ENCODE measurements at regions of chr5 and their contacts with region 1.

Region 1: DNA sequence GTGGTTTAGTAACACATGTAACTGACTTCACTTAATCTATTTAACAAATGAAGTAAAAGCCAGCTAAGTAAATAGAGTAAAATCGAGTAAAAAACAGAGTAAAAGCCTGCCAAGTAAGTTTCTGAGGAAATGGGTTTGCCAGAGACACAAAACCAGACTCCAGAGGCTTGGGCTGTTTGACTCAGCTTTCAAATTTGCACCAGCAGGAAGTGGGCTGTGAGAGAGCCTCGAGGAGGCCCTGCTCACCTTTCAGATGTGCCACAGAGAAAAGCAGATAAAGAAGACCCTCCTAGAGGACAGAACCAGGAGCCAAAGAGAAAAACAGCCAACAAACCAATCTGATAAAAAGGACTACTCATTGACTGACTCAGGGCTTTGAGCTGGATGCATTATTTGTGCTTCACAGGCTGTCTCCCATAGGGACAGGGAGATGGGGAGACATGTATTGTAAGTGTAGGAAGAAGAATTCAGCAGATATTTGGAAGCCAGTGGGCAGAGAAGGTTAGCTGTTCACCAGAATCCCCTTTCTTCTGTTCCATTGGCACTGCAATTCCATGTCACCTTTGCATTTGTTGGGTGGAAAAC is 14.4 kb upstream of the AMACR start:
- DNase-seq: peak; percentile 49
- ATAC-seq: peak; percentile 100
- H3K4me3 Mint-ChIP-seq: peak overlapping the region; percentile 65
- H3K27ac Mint-ChIP-seq: peak overlapping the region; percentile 94
- H3K4me1 Mint-ChIP-seq: peaks cover 21% of the 10 kb centered on the region
- H3K27me3 Mint-ChIP-seq: no peaks in the 10 kb centered on the region

Region 2: DNA sequence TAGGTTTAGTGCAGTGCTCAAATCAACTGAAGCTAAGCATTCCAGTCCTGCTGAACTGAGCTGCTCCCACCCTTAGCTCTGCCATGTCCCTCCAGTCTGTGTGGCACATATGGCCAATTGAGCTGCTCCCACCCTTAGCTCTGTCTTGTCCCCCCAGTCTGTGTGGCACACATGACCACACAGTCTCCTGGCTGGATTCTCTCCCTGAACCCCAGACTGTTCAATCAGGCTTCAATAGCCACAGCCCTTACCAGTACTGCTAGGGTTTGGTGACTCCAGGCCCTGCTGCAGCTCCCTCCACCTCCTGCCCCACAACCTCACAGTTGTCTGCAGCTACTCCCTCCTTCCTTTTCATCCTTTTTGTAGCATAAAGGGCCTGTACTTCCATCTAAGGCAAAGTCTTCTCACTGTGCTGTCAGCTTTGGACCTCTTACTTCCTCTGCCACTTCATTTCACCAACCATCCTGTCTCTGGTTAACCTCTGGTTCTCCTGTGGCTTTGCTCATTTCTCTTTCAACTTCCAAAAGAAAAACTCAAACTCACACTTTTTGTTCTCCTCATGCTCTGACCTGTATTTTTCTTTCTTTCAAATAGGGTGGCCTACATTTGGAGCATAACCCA is 181.2 kb before region 1 on chr5:
- POLR2A ChIA-PET with region 1: no interaction called
- DNase-seq: peak; percentile 42
- ATAC-seq: peak; percentile 97
- H3K4me3 Mint-ChIP-seq: peak overlapping the region; percentile 23
- H3K27ac Mint-ChIP-seq: peak overlapping the region; percentile 78
- H3K4me1 Mint-ChIP-seq: peaks cover 27% of the 10 kb centered on the region
- H3K27me3 Mint-ChIP-seq: peaks cover 9% of the 10 kb centered on the region

Region 3: DNA sequence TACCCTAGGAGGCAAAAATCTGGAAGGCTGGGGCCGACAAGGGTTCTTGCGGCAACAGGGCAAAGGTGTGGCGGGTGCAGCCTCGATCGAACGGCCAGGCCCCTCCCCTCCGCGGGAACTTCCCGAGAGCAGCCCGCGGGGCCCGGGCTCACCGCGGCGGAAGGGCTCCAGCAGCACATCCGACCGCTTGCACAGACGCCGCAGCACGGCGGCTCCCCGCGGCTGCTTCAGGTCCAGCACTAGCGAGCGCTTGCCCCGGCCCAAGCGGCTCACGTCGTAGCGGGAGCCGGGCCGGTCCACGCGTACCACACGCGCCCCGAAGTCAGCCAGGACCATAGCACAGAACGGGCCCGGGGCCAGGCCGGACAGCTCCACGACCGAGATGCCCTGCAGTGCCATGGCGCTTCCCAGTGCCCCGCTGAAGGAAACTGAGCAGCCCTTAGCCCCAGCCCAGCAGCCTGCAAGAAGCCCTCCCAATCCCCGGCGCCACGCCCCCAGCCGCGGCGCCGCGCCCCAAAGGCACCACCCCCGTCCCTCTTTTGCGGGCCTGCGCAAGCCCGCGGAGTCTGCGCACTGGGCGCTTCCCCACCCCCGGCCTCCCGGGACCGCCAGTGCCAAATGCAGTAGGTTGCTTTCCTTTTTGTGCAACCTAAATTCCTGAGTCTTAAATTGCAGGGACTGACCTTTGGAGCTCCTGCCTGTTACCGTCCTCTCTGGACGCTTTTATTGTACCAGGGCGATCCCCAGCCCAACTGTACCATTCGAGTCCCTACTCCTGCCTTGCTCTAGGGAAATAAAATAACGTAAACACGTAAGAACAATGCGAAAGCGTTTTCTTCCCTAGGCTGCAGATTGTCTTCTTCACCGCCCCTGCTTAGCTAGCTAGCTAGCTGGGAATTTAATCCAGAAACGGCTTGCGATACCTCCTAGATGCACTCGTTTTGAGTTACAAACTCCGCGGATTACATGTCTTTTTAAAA is 14.3 kb before region 1 on chr5 and contains the start of gene AMACR:
- POLR2A ChIA-PET with region 1: interaction called, 13 read pairs
- DNase-seq: peak; percentile 86
- ATAC-seq: peak; percentile 89
- H3K4me3 Mint-ChIP-seq: peak within 1 kb of the TSS; percentile 87
- H3K27ac Mint-ChIP-seq: peak within 1 kb of the TSS; percentile 90
- H3K4me1 Mint-ChIP-seq: peaks cover 23% of the 10 kb centered on the region
- H3K27me3 Mint-ChIP-seq: peaks cover 5% of the 10 kb centered on the region
- total RNA-seq, gene AMACR: 5.9 to 6.1 TPM

Region 4: DNA sequence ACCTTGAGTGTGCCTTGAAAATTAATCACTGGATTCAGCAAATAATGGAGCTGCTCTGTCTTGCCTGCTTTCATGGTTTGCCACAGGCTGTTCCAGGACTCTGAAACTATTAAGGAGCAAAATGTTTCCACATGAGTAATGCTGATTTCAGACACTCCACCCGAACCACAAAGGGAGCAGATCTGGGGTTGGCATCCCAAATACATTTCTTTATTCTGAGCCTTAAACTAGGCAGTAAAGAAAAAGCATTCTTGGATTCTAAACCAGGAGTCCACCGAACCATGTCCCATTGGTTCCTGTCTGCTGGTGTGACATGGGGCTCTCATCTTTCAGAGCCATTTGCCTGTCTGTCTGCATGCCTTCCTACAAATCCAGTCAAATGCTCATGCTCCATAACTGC is 30.9 kb after region 1 on chr5:
- POLR2A ChIA-PET with region 1: no interaction called
- DNase-seq: no peak
- ATAC-seq: no peak
- H3K4me3 Mint-ChIP-seq: no peak overlapping the region
- H3K27ac Mint-ChIP-seq: no peak overlapping the region
- H3K4me1 Mint-ChIP-seq: no peaks in the 10 kb centered on the region
- H3K27me3 Mint-ChIP-seq: no peaks in the 10 kb centered on the region